ENCODE measurements at regions of chr21 and their contacts with region 1.

Region 1: GRCh38 chr21:45287438-45288391 is at the start of gene POFUT2:
- DNase-seq: peak; percentile 97
- H3K4me3 Mint-ChIP-seq: peak within 1 kb of the TSS; percentile 84
- H3K27ac Mint-ChIP-seq: peak within 1 kb of the TSS; percentile 86
- H3K4me1 Mint-ChIP-seq: peaks cover 16% of the 10 kb centered on the region
- H3K27me3 Mint-ChIP-seq: peaks cover 12% of the 10 kb centered on the region
- total RNA-seq, gene POFUT2: 14.3 and 17.6 TPM in 2 replicates

Region 2: GRCh38 chr21:45109831-45110492 is 177.8 kb before region 1 on chr21:
- intact Hi-C with region 1: no loop called
- DNase-seq: peak; percentile 19
- H3K4me3 Mint-ChIP-seq: peak overlapping the region; percentile 41
- H3K27ac Mint-ChIP-seq: peak overlapping the region; percentile 5
- H3K4me1 Mint-ChIP-seq: peaks cover 66% of the 10 kb centered on the region
- H3K27me3 Mint-ChIP-seq: peaks cover 5% of the 10 kb centered on the region

Region 3: DNA sequence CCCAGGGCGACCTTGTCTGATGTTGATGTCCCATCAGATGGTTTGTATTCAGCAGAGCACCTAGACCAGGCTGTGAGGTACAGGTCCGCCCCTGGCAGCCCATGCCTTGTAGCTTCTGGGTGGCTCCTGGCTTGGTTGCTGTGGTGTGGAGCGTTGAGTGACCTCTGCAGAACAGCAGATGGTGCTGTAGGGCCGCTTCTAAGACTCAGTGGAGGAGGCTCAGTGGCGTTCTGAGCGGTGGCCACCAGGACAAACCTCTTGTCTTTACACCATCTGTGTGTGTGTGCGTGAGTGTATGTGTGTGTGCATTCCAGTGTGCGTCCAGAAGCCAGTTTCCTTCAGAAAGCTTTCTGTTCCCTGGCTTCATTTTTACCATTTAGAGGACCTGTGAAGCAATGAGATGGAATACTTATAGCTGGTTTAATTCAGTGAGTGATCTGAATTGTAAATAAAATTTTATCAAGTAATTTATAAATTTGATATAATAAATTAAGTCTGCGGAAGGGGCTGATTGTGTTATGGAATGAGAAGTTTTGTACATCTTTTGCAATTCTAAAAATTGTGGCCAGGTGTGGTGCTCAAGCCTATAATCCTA is 147.3 kb before region 1 on chr21:
- intact Hi-C with region 1: loop called (anchors 1 kb)
- DNase-seq: peak; percentile 50
- H3K4me3 Mint-ChIP-seq: no peak overlapping the region
- H3K27ac Mint-ChIP-seq: no peak overlapping the region
- H3K4me1 Mint-ChIP-seq: peaks cover 5% of the 10 kb centered on the region
- H3K27me3 Mint-ChIP-seq: no peaks in the 10 kb centered on the region

Region 4: DNA sequence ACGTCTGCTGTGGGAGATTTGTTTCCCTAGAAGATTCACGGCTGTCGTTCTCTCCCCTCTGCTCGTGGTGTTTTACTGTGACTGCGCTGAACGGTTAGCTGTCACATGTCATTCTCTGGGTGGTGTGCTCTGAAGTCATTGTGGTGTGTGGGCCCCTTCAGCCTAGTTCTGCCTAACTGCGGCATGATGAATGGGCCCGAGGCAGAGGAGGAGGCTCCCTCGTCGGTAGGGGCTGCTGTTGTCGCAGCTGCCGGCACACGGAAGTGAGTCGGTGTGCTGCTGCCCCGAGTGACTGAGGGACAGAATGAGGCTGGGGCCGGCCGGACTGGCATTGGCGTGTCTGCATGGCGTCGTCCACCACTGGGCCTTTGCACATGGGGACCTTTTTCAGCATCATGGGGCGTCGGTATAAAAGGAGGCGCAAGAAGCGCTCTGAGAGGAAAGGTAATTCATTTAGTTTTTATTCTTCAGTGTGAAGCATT is 135.4 kb before region 1 on chr21:
- intact Hi-C with region 1: loop called (anchors 2 kb)
- DNase-seq: peak; percentile 61
- H3K4me3 Mint-ChIP-seq: peak overlapping the region; percentile 71
- H3K27ac Mint-ChIP-seq: peak overlapping the region; percentile 14
- H3K4me1 Mint-ChIP-seq: peaks cover 24% of the 10 kb centered on the region
- H3K27me3 Mint-ChIP-seq: no peaks in the 10 kb centered on the region

Region 5: DNA sequence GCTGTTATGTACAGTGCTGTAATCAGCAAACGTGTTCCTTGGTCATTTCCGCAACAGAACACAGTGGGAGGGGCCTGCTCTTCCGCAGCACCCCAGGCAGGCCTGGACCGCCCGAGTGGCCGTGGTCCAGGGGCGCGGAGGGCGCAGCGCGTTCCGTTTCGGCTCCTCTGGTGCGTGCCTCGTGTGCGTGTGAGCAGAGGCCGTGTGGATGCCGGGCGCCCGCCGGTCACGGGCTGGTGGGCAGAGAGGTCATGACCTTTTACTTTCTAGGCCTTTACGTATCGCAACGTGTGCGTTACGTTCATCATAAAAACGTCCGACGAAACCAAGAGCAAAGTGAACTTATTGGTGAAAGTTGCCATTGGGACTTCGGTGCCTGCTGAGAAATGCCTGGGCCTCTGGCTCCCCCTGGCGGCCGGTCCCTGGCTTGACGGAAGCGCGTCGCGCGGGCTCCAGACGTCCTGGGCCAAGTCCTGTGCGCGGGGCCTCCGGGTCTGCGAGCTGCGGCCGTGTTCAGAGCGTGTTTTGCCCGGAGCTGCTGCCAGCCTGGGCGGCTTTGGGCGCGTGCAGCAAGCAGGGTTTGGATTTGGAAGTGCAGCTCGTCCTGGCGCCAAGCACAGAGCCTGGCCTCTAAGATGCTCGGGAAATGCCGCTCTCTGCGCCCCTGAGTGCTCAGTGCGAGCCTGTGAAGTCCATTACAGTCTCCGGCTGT is 151.6 kb after region 1 on chr21:
- intact Hi-C with region 1: loop called (anchors 1 kb)
- DNase-seq: peak; percentile 77
- H3K4me3 Mint-ChIP-seq: peak overlapping the region; percentile 5
- H3K27ac Mint-ChIP-seq: peak overlapping the region; percentile 18
- H3K4me1 Mint-ChIP-seq: peaks cover 6% of the 10 kb centered on the region
- H3K27me3 Mint-ChIP-seq: no peaks in the 10 kb centered on the region

Region 6: GRCh38 chr21:45880097-45881068 is 592.7 kb after region 1 on chr21:
- intact Hi-C with region 1: loop called (anchors 2 kb)
- DNase-seq: peak; percentile 51
- H3K4me3 Mint-ChIP-seq: no peak overlapping the region
- H3K27ac Mint-ChIP-seq: no peak overlapping the region
- H3K4me1 Mint-ChIP-seq: peaks cover 18% of the 10 kb centered on the region
- H3K27me3 Mint-ChIP-seq: peaks cover 12% of the 10 kb centered on the region

Measured in activated T-helper 1 cell treated with anti-CD3 and anti-CD28 coated beads, Interleukin-12 subunit alpha, Interleukin-12 subunit beta, Interleukin-2, Interleukin-4 antibody, amounts not matched to agents 30 ng/mL and 10 ng/mL and 1 ng/mL, durations not matched to agents 14 hours and 24 hours and 36 hours (primary cell).